Activated CD8-positive, alpha-beta T cell treated with anti-CD3 and anti-CD28 coated beads for 36 hours (primary cell): ENCODE measurements at regions of chr6 and their contacts with region 1.

Region 1: GRCh38 chr6:144582939-144583613 is 297.9 kb downstream of the UTRN start:
- DNase-seq: peak; percentile 66
- ATAC-seq: peak; percentile 80
- H3K4me3 Mint-ChIP-seq: peak overlapping the region; percentile 78
- H3K27ac Mint-ChIP-seq: peak overlapping the region; percentile 93
- H3K4me1 Mint-ChIP-seq: peaks cover 46% of the 10 kb centered on the region
- H3K27me3 Mint-ChIP-seq: no peaks in the 10 kb centered on the region
- CTCF ChIP-seq: no peak

Region 2: GRCh38 chr6:144321839-144322591 is 261.1 kb before region 1 on chr6:
- CTCF ChIA-PET with region 1: no interaction called
- POLR2A ChIA-PET with region 1: no interaction called
- intact Hi-C with region 1: no loop called
- DNase-seq: no peak
- ATAC-seq: no peak
- H3K4me3 Mint-ChIP-seq: no peak overlapping the region
- H3K27ac Mint-ChIP-seq: no peak overlapping the region
- H3K4me1 Mint-ChIP-seq: peaks cover 8% of the 10 kb centered on the region
- H3K27me3 Mint-ChIP-seq: no peaks in the 10 kb centered on the region
- CTCF ChIP-seq: no peak

Region 3: GRCh38 chr6:144595266-144595665 is 12.2 kb after region 1 on chr6:
- CTCF ChIA-PET with region 1: interaction called, 25 read pairs
- POLR2A ChIA-PET with region 1: no interaction called
- intact Hi-C with region 1: no loop called
- DNase-seq: no peak
- ATAC-seq: no peak
- H3K4me3 Mint-ChIP-seq: no peak overlapping the region
- H3K27ac Mint-ChIP-seq: no peak overlapping the region
- H3K4me1 Mint-ChIP-seq: peaks cover 22% of the 10 kb centered on the region
- H3K27me3 Mint-ChIP-seq: no peaks in the 10 kb centered on the region
- CTCF ChIP-seq: no peak

Region 4: DNA sequence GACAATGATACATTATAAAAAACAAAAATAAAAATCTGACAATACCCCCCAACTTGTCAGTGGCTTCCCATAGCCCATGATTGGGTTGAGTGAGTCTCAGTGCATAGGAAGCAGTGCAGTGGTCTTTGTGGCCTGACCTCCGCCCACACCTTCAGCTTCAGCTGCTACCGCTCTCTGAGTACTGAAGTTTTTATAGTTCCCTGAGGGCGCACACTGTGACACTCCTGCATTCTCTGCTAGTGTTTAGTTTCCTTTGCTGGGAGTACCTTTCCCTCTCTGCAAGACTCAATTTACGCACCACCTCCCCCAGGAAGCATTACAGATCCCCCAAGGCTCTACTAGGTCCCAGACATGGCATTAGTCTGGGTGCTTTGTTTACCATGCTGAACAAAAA is 143.1 kb after region 1 on chr6:
- CTCF ChIA-PET with region 1: interaction called, 5 read pairs
- POLR2A ChIA-PET with region 1: no interaction called
- intact Hi-C with region 1: loop called (anchors 5 kb)
- DNase-seq: peak; percentile 88
- ATAC-seq: peak; percentile 83
- H3K4me3 Mint-ChIP-seq: peak overlapping the region; percentile 9
- H3K27ac Mint-ChIP-seq: peak overlapping the region; percentile 61
- H3K4me1 Mint-ChIP-seq: peaks cover 65% of the 10 kb centered on the region
- H3K27me3 Mint-ChIP-seq: no peaks in the 10 kb centered on the region
- CTCF ChIP-seq: no peak

Region 5: GRCh38 chr6:144931172-144932035 is 348.3 kb after region 1 on chr6:
- CTCF ChIA-PET with region 1: interaction called, 16 read pairs
- POLR2A ChIA-PET with region 1: interaction called, 3 read pairs
- intact Hi-C with region 1: loop called (anchors 1 kb)
- DNase-seq: peak; percentile 67
- ATAC-seq: peak; percentile 65
- H3K4me3 Mint-ChIP-seq: no peak overlapping the region
- H3K27ac Mint-ChIP-seq: no peak overlapping the region
- H3K4me1 Mint-ChIP-seq: peaks cover 1% of the 10 kb centered on the region
- H3K27me3 Mint-ChIP-seq: no peaks in the 10 kb centered on the region
- CTCF ChIP-seq: peak; percentile 77

Region 6: DNA sequence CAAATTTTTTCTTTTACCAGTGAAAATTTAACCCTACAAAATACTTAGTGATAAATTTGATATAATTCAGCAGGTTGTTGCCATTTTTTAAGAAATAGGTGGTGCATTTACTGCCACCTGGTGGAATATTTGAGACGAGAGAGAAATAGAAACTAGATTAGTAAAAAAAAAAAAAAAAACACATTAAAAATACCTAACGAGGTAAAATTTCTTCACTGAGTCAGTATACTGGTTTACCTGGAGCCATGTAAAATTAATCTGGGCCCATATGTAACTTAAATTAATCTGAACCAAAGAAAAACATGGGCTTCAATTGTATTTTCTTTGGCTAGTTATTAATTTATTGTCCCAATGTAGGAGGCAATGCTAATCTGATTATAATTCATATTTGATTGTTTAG is 631.5 kb after region 1 on chr6:
- CTCF ChIA-PET with region 1: interaction called, 4 read pairs
- POLR2A ChIA-PET with region 1: no interaction called
- intact Hi-C with region 1: loop called (anchors 10 kb)
- DNase-seq: no peak
- ATAC-seq: no peak
- H3K4me3 Mint-ChIP-seq: no peak overlapping the region
- H3K27ac Mint-ChIP-seq: no peak overlapping the region
- H3K4me1 Mint-ChIP-seq: no peaks in the 10 kb centered on the region
- H3K27me3 Mint-ChIP-seq: peaks cover 2% of the 10 kb centered on the region
- CTCF ChIP-seq: peak; percentile 67